GM10248 (cell line): ENCODE measurements at regions of chr11 and their contacts with region 1.

Region 1: DNA sequence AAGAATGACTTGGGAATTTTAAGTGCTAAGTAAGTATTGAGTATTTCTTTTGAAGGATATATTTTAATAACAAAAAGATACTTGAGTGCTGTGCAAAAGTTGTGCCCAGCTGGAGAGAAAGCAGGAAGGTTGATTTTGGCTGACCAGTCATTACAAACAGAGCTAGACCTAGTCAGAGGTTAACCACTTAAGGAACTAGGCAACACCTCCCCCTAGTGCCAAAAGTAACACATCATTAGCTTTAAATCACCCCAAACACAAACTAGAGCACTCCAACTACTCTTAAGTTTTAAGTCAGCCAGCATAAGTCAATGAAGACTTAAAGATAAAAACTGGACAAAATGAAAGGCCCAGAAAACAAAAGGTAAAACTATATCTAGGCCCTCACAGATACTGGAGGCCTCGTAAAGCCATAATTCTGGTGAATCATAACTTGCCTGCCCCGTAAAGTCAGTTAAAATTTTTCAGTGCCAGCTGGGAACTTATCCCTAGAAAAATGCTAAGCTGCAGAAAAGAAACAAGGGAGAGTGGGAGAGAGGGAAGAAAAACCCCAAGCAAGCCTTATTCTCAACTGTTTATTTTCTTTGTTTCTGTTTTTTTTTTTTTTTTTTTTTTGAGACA is 4.6 kb downstream of the TMEM9B start:
- DNase-seq: peak; percentile 82
- CTCF ChIP-seq: peak; percentile 58

Region 2: DNA sequence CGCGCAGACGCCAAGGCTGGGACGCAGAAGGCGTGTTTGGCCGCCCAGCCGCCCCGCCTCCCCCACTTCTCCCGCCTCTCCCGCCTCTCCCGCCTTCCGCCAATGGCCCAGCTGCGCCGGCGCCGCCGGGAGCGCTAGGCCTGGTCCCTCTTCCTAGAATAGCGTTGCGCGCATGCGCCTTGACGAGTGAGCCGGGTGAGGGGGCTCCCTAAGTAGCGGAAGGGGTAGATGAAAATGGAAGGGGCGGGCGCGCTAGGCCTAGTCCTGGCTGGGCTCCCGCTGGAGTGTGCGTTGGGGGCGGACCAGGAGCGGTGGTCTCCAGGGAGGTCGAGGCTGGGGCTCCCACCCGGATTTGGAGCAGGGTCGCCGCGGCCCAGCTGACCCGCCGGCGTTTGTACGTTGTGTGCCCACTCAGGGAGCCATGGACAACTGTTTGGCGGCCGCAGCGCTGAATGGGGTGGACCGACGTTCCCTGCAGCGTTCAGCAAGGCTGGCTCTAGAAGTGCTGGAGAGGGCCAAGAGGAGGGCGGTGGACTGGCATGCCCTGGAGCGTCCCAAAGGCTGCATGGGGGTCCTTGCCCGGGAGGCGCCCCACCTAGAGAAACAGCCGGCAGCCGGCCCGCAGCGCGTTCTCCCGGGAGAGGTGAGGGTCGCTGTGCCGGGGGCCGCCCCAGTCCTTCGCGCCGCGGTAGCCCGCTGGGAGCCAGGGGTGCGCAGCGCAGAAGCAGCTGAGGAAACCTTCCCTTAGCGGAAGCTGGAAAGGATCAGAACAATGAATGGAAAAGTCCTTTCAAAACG is 48.4 kb before region 1 on chr11 and contains the start of gene AKIP1:
- CTCF ChIA-PET with region 1: interaction called, 18 read pairs
- POLR2A ChIA-PET with region 1: interaction called, 3 read pairs
- DNase-seq: peak; percentile 91
- CTCF ChIP-seq: no peak

Region 3: DNA sequence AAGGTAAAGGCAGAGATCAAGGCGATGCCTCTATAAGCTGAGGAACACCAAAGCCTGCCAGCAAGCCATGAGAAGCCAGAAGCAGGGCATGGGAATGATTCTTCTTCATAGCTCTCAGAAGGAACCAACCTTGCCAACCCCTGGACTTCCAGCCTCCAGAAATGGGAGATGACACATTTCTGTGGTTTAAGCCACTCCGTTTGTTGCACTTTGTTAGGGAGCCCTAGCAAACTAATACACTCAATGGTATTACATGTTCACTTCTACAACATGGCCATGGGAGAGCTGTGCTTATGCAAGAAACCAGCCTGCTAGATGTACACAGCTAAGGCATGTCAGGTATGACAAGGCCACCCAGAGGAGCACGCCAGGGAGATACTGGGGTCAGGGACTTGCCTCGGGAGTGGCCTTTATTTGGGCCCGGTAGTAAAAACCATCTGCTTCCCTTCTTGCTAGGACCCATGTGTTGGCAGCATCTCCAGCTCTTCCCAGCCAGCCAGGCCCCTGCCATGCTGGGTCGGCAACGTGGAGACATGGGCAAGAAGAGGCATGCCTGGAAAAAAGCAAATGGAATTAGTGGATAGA is 30.6 kb before region 1 on chr11:
- CTCF ChIA-PET with region 1: interaction called, 18 read pairs
- POLR2A ChIA-PET with region 1: interaction called, 6 read pairs
- DNase-seq: no peak
- CTCF ChIP-seq: no peak

Region 4: GRCh38 chr11:8934749-8935478 is 24.7 kb before region 1 on chr11:
- CTCF ChIA-PET with region 1: interaction called, 102 read pairs
- POLR2A ChIA-PET with region 1: interaction called, 6 read pairs
- DNase-seq: no peak
- CTCF ChIP-seq: no peak

Region 5: GRCh38 chr11:8948886-8949285 is 10.8 kb before region 1 on chr11:
- CTCF ChIA-PET with region 1: interaction called, 102 read pairs
- POLR2A ChIA-PET with region 1: no interaction called
- DNase-seq: no peak
- CTCF ChIP-seq: no peak